Activated naive CD4-positive, alpha-beta T cell treated with anti-CD3 and anti-CD28 coated beads for 36 hours (primary cell): ENCODE measurements at regions of chr15 and their contacts with region 1.

Region 1: GRCh38 chr15:44308415-44308814 is 19.9 kb downstream of the GOLM2 start:
- DNase-seq: peak; percentile 30
- H3K4me3 Mint-ChIP-seq: peak overlapping the region; percentile 43
- H3K27ac Mint-ChIP-seq: peak overlapping the region; percentile 81
- H3K4me1 Mint-ChIP-seq: peaks cover 37% of the 10 kb centered on the region
- H3K27me3 Mint-ChIP-seq: no peaks in the 10 kb centered on the region

Region 2: DNA sequence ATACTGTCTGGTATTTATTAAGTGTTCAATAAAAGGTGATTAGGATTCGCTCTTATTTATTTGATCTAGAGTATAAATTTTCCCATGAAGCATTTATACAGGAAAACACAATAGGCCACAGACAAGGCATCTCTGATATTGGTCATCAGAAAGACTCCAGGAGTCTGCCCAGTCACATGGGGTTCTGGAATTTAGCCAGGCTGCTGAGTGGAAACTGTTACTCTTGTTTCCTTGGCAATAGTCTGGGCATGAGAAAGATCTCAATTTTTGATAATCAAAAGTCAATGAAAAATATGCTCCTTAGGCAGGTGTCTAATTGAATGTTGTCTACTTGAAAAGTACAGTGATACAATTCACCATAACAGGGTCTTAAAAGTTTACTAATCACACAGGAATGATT is 274.5 kb before region 1 on chr15:
- CTCF ChIA-PET with region 1: no interaction called
- intact Hi-C with region 1: loop called (anchors 5 kb)
- DNase-seq: no peak
- H3K4me3 Mint-ChIP-seq: no peak overlapping the region
- H3K27ac Mint-ChIP-seq: no peak overlapping the region
- H3K4me1 Mint-ChIP-seq: peaks cover 7% of the 10 kb centered on the region
- H3K27me3 Mint-ChIP-seq: peaks cover 12% of the 10 kb centered on the region

Region 3: DNA sequence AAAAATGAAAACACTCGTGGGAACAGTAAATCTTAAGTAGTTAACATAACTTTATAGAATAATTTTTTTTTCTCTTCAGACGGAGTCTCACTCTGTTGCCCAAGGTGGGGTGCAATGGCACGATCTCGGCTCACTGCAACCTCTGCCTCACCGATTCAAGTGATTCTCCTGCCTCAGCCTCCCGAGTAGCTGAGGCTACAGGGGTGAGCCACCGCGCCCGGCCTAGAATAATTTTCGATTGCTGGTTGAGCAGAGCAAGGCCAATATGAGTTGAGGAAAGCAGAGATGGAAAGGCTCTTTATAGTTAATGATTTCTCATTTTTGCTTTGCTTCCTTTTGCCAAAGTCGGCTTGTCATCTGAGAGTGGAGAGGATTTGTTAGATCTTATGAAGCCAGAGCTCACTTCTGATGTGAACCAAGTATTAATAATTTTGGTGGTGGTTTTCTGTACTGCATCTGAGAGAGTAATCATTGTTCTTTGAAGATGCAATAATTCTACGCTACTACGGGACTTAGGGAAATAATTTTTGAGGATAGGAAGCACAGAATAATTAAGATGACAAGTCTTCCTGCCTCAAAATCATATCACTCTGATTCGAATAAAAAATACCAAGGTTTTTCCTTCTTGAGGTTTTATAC is 21.5 kb before region 1 on chr15:
- CTCF ChIA-PET with region 1: interaction called, 6 read pairs
- intact Hi-C with region 1: loop called (anchors 1 kb)
- DNase-seq: no peak
- H3K4me3 Mint-ChIP-seq: peak overlapping the region; percentile 88
- H3K27ac Mint-ChIP-seq: peak overlapping the region; percentile 94
- H3K4me1 Mint-ChIP-seq: peaks cover 36% of the 10 kb centered on the region
- H3K27me3 Mint-ChIP-seq: no peaks in the 10 kb centered on the region

Region 4: DNA sequence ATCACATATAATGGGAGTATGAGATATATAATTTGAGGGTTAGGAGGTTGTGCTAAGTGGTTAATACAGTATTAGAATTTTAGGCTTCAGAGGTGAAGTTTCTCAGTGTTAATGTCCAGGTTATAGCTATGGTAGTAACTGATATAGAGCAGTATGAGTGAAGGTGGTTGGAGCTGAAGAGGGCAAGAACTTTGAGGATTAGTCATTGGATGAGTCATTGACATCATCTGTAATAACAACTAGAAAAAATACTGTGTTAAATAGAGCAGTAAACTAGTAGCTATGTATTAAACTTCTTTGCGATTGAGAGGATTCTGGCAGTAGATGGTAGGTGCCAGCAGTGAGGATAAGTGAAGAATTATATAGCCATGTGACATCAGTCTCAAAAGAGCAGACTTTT is 181.0 kb after region 1 on chr15:
- CTCF ChIA-PET with region 1: no interaction called
- intact Hi-C with region 1: loop called (anchors 1 kb)
- DNase-seq: no peak
- H3K4me3 Mint-ChIP-seq: no peak overlapping the region
- H3K27ac Mint-ChIP-seq: no peak overlapping the region
- H3K4me1 Mint-ChIP-seq: peaks cover 41% of the 10 kb centered on the region
- H3K27me3 Mint-ChIP-seq: no peaks in the 10 kb centered on the region

Region 5: GRCh38 chr15:44753345-44753744 is 444.9 kb after region 1 on chr15:
- CTCF ChIA-PET with region 1: no interaction called
- intact Hi-C with region 1: loop called (anchors 2 kb)
- DNase-seq: no peak
- H3K4me3 Mint-ChIP-seq: no peak overlapping the region
- H3K27ac Mint-ChIP-seq: no peak overlapping the region
- H3K4me1 Mint-ChIP-seq: peaks cover 27% of the 10 kb centered on the region
- H3K27me3 Mint-ChIP-seq: no peaks in the 10 kb centered on the region

Region 6: GRCh38 chr15:44910981-44911625 is 602.7 kb after region 1 on chr15:
- CTCF ChIA-PET with region 1: no interaction called
- intact Hi-C with region 1: loop called (anchors 2 kb)
- DNase-seq: no peak
- H3K4me3 Mint-ChIP-seq: no peak overlapping the region
- H3K27ac Mint-ChIP-seq: no peak overlapping the region
- H3K4me1 Mint-ChIP-seq: peaks cover 6% of the 10 kb centered on the region
- H3K27me3 Mint-ChIP-seq: peaks cover 2% of the 10 kb centered on the region